Caco-2 (cell line): ENCODE measurements at regions of chr9 and their contacts with region 1.

Region 1: GRCh38 chr9:122912964-122913673 is at the start of gene ZBTB6:
- DNase-seq: peak; percentile 79 to 82
- H3K4me3 ChIP-seq: peak within 1 kb of the TSS; percentile 87
- H3K4me3 Mint-ChIP-seq: peak within 1 kb of the TSS; percentile 94
- H3K27ac Mint-ChIP-seq: peak within 1 kb of the TSS; percentile 85
- H3K4me1 ChIP-seq: peaks cover 6% of the 10 kb centered on the region; the same call in 1 of the 2 replicates
- H3K4me1 Mint-ChIP-seq: no peaks in the 10 kb centered on the region
- H3K27me3 ChIP-seq: no peaks in the 10 kb centered on the region
- H3K27me3 Mint-ChIP-seq: no peaks in the 10 kb centered on the region
- CTCF ChIP-seq: no peak
- total RNA-seq, gene ZBTB6: 6.8 and 7.2 TPM in 2 replicates

Region 2: GRCh38 chr9:122931226-122932121 is 18.4 kb after region 1 on chr9 and contains the start of gene ZBTB26:
- CTCF ChIA-PET with region 1: interaction called, 4 read pairs
- POLR2A ChIA-PET with region 1: interaction called, 20 read pairs
- intact Hi-C with region 1: loop called (anchors 1 kb)
- DNase-seq: peak; percentile 93 to 96
- H3K4me3 ChIP-seq: peak within 1 kb of the TSS; percentile 74
- H3K4me3 Mint-ChIP-seq: no peak within 1 kb of the TSS
- H3K27ac Mint-ChIP-seq: no peak within 1 kb of the TSS
- H3K4me1 ChIP-seq: no peaks in the 10 kb centered on the region; the same call in 1 of the 2 replicates
- H3K4me1 Mint-ChIP-seq: peaks cover 9% of the 10 kb centered on the region
- H3K27me3 ChIP-seq: no peaks in the 10 kb centered on the region
- H3K27me3 Mint-ChIP-seq: no peaks in the 10 kb centered on the region
- CTCF ChIP-seq: no peak
- total RNA-seq, gene ZBTB26: 8.7 and 10.3 TPM in 2 replicates

Region 3: GRCh38 chr9:122940603-122941559 is 27.8 kb after region 1 on chr9 and contains the start of gene RABGAP1:
- CTCF ChIA-PET with region 1: interaction called, 4 read pairs
- POLR2A ChIA-PET with region 1: interaction called, 35 read pairs
- intact Hi-C with region 1: loop called (anchors 1 kb)
- DNase-seq: peak; percentile 98 to 99
- H3K4me3 ChIP-seq: peak within 1 kb of the TSS; percentile 80
- H3K4me3 Mint-ChIP-seq: peak within 1 kb of the TSS; percentile 94
- H3K27ac Mint-ChIP-seq: peak within 1 kb of the TSS; percentile 87
- H3K4me1 ChIP-seq: peaks cover 9% of the 10 kb centered on the region; the same call in 1 of the 2 replicates
- H3K4me1 Mint-ChIP-seq: peaks cover 14% of the 10 kb centered on the region
- H3K27me3 ChIP-seq: no peaks in the 10 kb centered on the region
- H3K27me3 Mint-ChIP-seq: no peaks in the 10 kb centered on the region
- CTCF ChIP-seq: no peak
- total RNA-seq, gene RABGAP1: 52.1 and 55.4 TPM in 2 replicates

Region 4: GRCh38 chr9:122954253-122954691 is 41.2 kb after region 1 on chr9:
- CTCF ChIA-PET with region 1: no interaction called
- POLR2A ChIA-PET with region 1: no interaction called
- intact Hi-C with region 1: no loop called
- DNase-seq: no peak
- H3K4me3 ChIP-seq: no peak overlapping the region
- H3K4me3 Mint-ChIP-seq: no peak overlapping the region
- H3K27ac Mint-ChIP-seq: no peak overlapping the region
- H3K4me1 ChIP-seq: no peaks in the 10 kb centered on the region
- H3K4me1 Mint-ChIP-seq: peaks cover 26% of the 10 kb centered on the region
- H3K27me3 ChIP-seq: no peaks in the 10 kb centered on the region
- H3K27me3 Mint-ChIP-seq: no peaks in the 10 kb centered on the region
- CTCF ChIP-seq: no peak